Right cardiac atrium (tissue), 5 donors: ENCODE measurements at regions of chr11 and their contacts with region 1.

Region 1: GRCh38 chr11:68118706-68119448 is 2.3 kb downstream of the CHKA start:
- DNase-seq: no peak
- ATAC-seq: no peak
- H3K4me3 ChIP-seq: no peak overlapping the region
- H3K27ac ChIP-seq: peak overlapping the region; percentile 88
- H3K4me1 ChIP-seq: peaks cover 4% of the 10 kb centered on the region
- H3K27me3 ChIP-seq: no peaks in the 10 kb centered on the region

Region 2: GRCh38 chr11:68038718-68039525 is 80.0 kb before region 1 on chr11 and contains the start of gene TCIRG1:
- intact Hi-C with region 1: loop called in 1 of 4 experiments (anchors 5 kb)
- DNase-seq: peak; percentile 89 to 96 (median 96)
- ATAC-seq: peak; percentile 88 to 90
- H3K4me3 ChIP-seq: peak within 1 kb of the TSS; percentile 73
- H3K27ac ChIP-seq: peak within 1 kb of the TSS; percentile 83
- H3K4me1 ChIP-seq: peaks cover 11% of the 10 kb centered on the region
- H3K27me3 ChIP-seq: no peaks in the 10 kb centered on the region
- total RNA-seq, gene TCIRG1: 23.4 to 40.2 (median 36.6) TPM